ENCODE measurements at regions of chr15 and their contacts with region 1.

Region 1: DNA sequence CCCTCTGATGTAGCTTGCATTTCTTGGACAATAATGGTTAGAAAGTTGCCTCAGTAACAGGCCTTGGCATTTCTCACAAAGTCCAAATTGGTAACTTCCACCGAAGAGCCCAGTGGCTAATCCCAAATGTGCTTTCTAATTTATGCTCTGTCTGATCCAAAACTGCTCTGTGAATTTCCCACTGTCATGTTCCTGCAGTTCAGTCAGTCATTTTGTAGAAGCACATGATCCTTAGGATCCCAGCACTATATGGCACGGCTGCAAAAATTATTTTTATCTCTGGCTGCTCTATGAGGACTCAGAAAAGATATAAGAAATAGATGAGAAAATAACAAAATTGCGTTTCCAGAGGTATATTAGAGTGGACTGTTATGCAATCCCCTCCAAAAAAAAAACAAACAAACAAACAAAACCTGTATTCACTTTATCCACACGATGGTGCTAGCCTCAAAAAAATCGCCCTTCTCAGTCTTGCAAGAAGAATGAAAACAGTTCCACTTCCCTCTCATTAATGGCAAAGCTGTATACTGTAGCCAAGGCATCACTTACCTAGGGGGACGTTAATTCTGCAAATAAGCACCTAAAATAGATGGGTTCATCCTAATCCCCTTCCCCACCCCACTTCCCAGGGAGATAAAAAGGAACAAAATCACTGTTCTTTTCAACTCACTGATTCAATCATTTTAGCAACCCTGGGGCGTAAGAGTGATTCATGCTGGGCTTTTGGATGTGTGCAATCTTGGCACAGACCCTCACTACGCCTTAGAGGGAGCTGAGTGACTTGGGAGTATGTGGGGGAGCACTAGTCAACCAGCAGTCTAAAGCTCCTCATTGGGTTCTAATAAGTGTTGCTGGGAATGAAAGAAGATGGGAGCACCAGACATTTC is 61.3 kb downstream of the TMCO5A start:
- DNase-seq: peak; percentile 24
- H3K4me3 ChIP-seq: no peak overlapping the region
- H3K27me3 ChIP-seq: peaks cover 2% of the 10 kb centered on the region
- CTCF ChIP-seq: peak; percentile 60

Region 2: DNA sequence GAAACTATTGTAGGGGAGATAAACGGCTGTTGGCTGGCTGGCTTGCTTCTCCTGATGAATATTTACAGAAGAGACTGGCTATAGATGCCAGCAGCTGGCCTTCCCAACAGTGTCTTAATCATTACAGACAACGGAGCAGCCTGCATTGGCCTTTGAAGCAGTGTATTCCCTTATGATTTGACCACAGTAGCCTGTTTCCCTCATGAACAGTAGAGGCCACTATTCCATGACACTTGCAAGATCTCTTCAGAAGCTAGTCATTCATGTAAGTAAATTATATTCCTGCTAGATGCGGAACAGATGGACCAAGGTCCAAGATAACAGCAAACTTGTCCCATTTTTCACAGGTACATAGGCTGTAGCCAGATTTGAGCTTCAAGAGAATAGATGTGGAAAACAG is 13.9 kb before region 1 on chr15:
- CTCF ChIA-PET with region 1: interaction called, 11 read pairs
- POLR2A ChIA-PET with region 1: no interaction called
- DNase-seq: no peak
- H3K4me3 ChIP-seq: no peak overlapping the region
- H3K27me3 ChIP-seq: no peaks in the 10 kb centered on the region
- CTCF ChIP-seq: peak; percentile 58

Region 3: GRCh38 chr15:38354315-38354929 is 358.7 kb after region 1 on chr15:
- CTCF ChIA-PET with region 1: interaction called, 31 read pairs
- POLR2A ChIA-PET with region 1: no interaction called
- DNase-seq: no peak
- H3K4me3 ChIP-seq: no peak overlapping the region
- H3K27me3 ChIP-seq: no peaks in the 10 kb centered on the region
- CTCF ChIP-seq: peak; percentile 69

Region 4: GRCh38 chr15:38414357-38414756 is 418.7 kb after region 1 on chr15:
- CTCF ChIA-PET with region 1: interaction called, 43 read pairs
- POLR2A ChIA-PET with region 1: no interaction called
- DNase-seq: no peak
- H3K4me3 ChIP-seq: no peak overlapping the region
- H3K27me3 ChIP-seq: peaks cover 19% of the 10 kb centered on the region
- CTCF ChIP-seq: peak; percentile 84